HepG2 (cell line): ENCODE measurements at regions of chr12 and their contacts with region 1.

Region 1: DNA sequence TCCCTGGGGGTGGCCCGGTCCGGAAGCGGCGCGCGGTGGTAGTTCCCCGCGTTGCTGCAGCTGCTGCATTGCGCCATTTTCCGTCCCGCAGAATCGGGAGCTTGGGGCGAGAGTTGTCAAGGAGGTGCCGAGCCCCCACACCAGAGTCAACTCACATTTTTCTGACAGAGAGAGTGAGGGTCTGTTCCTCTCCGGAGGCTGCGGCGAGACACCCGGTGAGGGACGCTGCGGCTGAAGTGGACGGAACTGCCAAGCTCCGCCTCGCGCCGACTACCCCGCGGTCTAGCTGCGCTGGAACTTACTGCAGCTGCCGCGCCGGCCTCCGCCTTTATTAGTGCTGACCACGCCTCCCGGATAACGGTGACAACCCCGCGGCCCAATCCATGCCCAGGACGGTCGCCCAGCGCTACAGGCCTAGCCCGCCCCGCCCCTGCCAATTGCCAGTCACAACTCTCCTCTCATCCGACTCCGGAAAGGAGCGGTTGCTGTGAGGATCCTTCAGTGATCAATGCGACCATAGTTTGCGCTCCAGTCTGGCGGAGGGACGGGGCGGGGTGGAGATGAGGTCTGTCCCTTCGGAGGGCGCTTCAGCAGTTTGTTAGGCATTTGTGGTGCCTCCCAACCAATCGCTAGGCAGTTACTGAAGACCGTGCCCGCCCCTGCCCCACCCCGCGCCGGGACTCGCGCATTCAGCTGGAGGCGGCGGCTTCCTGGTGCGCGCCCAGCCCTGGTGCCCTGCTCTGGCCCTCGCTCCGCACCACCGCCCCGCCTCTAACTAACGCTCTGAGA is at the start of gene VAMP1:
- DNase-seq: peak; percentile 97
- ATAC-seq: peak; percentile 96
- H3K4me3 ChIP-seq: peak within 1 kb of the TSS; percentile 69 to 76 (median 74)
- H3K27ac ChIP-seq: peak within 1 kb of the TSS; percentile 56
- H3K4me1 ChIP-seq: peaks cover 44% of the 10 kb centered on the region
- H3K27me3 ChIP-seq: no peaks in the 10 kb centered on the region
- CTCF ChIP-seq: peak; percentile 34
- EP300 ChIP-seq: no peak
- POLR2A ChIP-seq: peak; percentile 99 to 100
- RAD21 ChIP-seq: no peak
- total RNA-seq, gene VAMP1: 0.45 and 2.5 TPM in 2 replicates

Region 2: DNA sequence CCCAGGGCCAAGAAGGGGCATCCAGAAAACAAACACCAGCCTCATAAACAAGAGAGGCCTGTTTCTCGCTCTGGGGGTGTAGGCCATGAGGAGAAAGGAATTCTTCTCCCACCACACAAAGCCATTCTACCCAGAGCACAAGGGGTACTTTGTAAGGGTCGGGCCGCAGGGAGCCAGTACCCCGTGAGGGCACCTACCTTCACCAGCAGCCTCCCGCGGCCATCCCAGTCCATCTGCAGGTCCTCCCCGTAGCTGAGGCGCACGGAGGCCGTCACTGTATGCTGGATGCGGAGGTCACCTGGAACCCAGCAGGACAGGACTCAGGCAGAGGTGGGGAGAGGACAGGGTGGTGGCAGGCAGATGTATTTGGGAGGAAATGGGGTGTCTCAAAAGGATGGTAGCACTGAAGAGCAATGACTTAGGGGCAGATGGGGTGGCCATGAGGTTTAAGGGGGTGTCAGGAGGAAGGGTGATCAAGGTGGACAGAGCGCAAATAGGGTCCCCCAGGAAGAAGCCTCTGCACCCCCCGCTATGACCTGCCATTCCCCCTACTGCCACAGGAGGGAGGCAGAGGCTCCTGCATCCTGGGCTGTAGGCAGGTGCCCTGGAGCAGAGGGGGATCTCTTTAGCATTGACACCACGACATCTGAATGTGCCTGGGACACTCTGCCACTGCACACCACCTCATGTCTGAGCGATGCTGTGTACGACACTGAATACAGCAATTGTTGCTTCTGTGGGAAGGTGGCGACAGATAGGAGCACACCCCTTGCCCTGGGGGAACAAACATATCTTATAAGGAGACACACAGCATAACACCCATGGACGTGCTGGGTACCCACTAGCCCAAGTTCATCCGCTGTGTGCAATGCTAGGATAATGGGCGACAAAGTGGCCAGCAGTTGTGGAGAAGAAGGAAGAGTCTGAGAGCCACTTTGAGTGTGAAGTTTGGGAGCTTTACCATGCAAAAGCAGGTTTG is 407.5 kb before region 1 on chr12:
- CTCF ChIA-PET with region 1: no interaction called
- POLR2A ChIA-PET with region 1: no interaction called
- in situ Hi-C with region 1: loop called (anchors 25 kb)
- intact Hi-C with region 1: no loop called
- DNase-seq: peak; percentile 24
- ATAC-seq: peak; percentile 73
- H3K4me3 ChIP-seq: peak overlapping the region in 1 of 3 experiments; percentile 42; a peak in 1 of 6 replicates
- H3K27ac ChIP-seq: no peak overlapping the region
- H3K4me1 ChIP-seq: peaks cover 54% of the 10 kb centered on the region
- H3K27me3 ChIP-seq: peaks cover 0 to 15% of the 10 kb centered on the region in 2 experiments; a peak in 2 of 5 replicates
- CTCF ChIP-seq: peak; percentile 95
- EP300 ChIP-seq: no peak
- POLR2A ChIP-seq: no peak
- RAD21 ChIP-seq: peak; percentile 89

Region 3: DNA sequence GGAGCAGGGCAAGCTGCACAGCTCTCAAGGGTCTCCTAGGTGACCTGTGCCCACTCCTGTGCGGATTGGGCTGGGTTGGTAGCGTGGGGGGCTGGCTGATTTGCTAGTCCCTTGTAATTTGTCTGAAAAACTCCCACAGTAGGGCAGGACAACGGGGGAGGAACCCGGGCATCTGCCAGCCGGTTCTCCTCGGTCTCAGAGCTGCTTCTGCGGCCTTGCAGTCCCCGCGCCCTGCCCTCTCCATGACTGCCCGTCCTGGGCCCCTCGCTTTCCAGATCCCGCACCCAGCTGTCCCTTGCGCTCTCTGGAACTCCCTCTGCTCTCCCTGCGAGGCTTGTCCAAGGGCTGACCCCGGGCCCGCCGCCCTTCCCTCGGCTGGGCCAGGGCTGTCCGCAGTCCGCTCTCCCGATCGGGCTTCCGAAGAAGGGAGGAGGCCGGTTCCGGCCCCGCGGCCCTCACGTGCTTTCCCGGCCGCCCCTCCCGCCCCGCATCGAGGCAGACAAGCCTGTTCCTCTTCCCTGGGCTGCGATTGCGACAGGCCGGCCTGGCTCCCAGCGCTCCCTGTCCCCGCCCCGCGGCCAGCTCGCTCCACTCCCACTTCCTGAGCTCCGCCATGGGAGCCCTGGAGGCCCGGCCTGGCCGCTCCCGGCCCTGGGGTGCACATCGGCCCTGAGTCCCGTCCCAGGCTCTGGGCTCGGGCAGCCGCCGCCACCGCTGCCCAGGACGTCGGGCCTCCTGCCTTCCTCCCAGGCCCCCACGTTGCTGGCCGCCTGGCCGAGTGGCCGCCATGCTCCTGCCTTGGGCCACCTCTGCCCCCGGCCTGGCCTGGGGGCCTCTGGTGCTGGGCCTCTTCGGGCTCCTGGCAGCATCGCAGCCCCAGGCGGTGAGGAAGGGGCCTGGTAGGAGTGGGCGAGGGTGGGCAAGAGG is 86.7 kb before region 1 on chr12 and contains the start of gene LTBR:
- CTCF ChIA-PET with region 1: no interaction called
- POLR2A ChIA-PET with region 1: interaction called, 25 read pairs
- in situ Hi-C with region 1: no loop called
- intact Hi-C with region 1: no loop called
- DNase-seq: peak; percentile 83
- ATAC-seq: peak; percentile 91
- H3K4me3 ChIP-seq: peak within 1 kb of the TSS; percentile 81 to 95 (median 87)
- H3K27ac ChIP-seq: peak within 1 kb of the TSS; percentile 86
- H3K4me1 ChIP-seq: peaks cover 59% of the 10 kb centered on the region
- H3K27me3 ChIP-seq: no peaks in the 10 kb centered on the region; a peak in 1 of 5 replicates
- CTCF ChIP-seq: peak; percentile 52; the same call in 1 of the 2 replicates
- EP300 ChIP-seq: peak in 1 of 2 experiments; percentile 33; a peak in 1 of 4 replicates
- POLR2A ChIP-seq: peak; percentile 67 to 74; a peak in 3 of 4 replicates
- RAD21 ChIP-seq: peak; percentile 36; the same call in 1 of the 2 replicates
- total RNA-seq, gene LTBR: 12.1 and 34.8 TPM in 2 replicates

Region 4: GRCh38 chr12:6423267-6424007 is 47.1 kb before region 1 on chr12:
- CTCF ChIA-PET with region 1: interaction called, 29 read pairs
- POLR2A ChIA-PET with region 1: interaction called, 20 read pairs
- in situ Hi-C with region 1: no loop called
- intact Hi-C with region 1: loop called (anchors 1 kb)
- DNase-seq: peak; percentile 81
- ATAC-seq: peak; percentile 92
- H3K4me3 ChIP-seq: peak overlapping the region in 1 of 3 experiments; percentile 12; a peak in 1 of 6 replicates
- H3K27ac ChIP-seq: no peak overlapping the region
- H3K4me1 ChIP-seq: peaks cover 63% of the 10 kb centered on the region
- H3K27me3 ChIP-seq: peaks cover 2 to 12% of the 10 kb centered on the region in 2 experiments; a peak in 2 of 5 replicates
- CTCF ChIP-seq: peak; percentile 95
- EP300 ChIP-seq: no peak
- POLR2A ChIP-seq: no peak
- RAD21 ChIP-seq: peak; percentile 84

Region 5: GRCh38 chr12:6451348-6452244 is 19.0 kb before region 1 on chr12 and contains the start of gene TAPBPL:
- CTCF ChIA-PET with region 1: no interaction called
- POLR2A ChIA-PET with region 1: interaction called, 68 read pairs
- in situ Hi-C with region 1: no loop called
- intact Hi-C with region 1: no loop called
- DNase-seq: peak; percentile 89
- ATAC-seq: peak; percentile 94
- H3K4me3 ChIP-seq: peak within 1 kb of the TSS; percentile 87 to 94 (median 90)
- H3K27ac ChIP-seq: peak within 1 kb of the TSS; percentile 90
- H3K4me1 ChIP-seq: peaks cover 34% of the 10 kb centered on the region
- H3K27me3 ChIP-seq: no peaks in the 10 kb centered on the region; a peak in 1 of 5 replicates
- CTCF ChIP-seq: no peak
- EP300 ChIP-seq: no peak
- POLR2A ChIP-seq: peak; percentile 68 to 79
- RAD21 ChIP-seq: no peak
- total RNA-seq, gene TAPBPL: 3.2 and 10.0 TPM in 2 replicates

Region 6: DNA sequence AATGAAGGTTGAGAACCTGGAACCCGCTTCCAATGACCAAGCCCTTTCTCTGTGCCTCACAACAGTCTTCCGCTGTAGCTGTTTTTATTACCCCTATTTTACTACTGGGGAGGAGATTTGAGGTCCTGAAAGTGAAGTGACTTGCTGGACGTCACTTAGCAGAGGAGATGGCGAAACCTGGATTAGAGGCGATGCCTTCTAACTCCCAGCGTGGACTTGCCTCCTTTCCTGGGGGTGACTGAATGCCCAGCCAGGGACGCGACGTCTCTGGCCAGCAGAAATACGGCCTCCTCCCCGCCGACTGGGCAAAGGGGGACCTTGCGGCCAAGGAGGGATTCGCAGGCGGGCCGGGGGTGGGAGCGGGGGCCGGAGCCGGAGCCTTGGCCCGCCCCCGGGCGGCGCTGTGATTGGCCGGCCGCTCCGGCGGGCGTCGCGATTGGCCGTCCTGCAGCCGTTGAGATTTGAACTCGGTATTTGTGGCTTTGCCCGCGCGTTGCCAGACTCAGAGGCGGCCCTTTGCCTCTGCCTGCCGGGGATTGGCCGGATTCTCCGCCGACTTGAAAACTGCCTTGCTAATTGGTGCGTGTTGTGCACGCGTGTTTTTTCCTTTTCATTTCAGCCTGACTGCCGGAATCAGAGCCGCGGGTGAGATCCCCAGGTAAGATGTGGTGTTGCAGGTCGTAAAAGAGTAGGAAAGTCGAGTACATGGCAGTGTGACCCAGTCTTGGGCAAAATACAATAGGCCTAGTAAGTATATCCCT is 23.1 kb after region 1 on chr12 and contains the start of gene NCAPD2:
- CTCF ChIA-PET with region 1: no interaction called
- POLR2A ChIA-PET with region 1: interaction called, 38 read pairs
- in situ Hi-C with region 1: no loop called
- intact Hi-C with region 1: no loop called
- DNase-seq: peak; percentile 94
- ATAC-seq: peak; percentile 94
- H3K4me3 ChIP-seq: peak within 1 kb of the TSS; percentile 80 to 83 (median 81)
- H3K27ac ChIP-seq: peak within 1 kb of the TSS; percentile 98
- H3K4me1 ChIP-seq: peaks cover 38% of the 10 kb centered on the region
- H3K27me3 ChIP-seq: no peaks in the 10 kb centered on the region; a peak in 1 of 5 replicates
- CTCF ChIP-seq: no peak; the same call in 1 of the 2 replicates
- EP300 ChIP-seq: no peak
- POLR2A ChIP-seq: peak; percentile 5 to 68; a peak in 3 of 4 replicates
- RAD21 ChIP-seq: no peak
- total RNA-seq, gene NCAPD2: 65.6 and 100 TPM in 2 replicates

Region 7: GRCh38 chr12:6540181-6540877 is 69.8 kb after region 1 on chr12:
- CTCF ChIA-PET with region 1: no interaction called
- POLR2A ChIA-PET with region 1: interaction called, 54 read pairs
- in situ Hi-C with region 1: no loop called
- intact Hi-C with region 1: loop called (anchors 10 kb)
- DNase-seq: no peak
- ATAC-seq: peak; percentile 2
- H3K4me3 ChIP-seq: no peak overlapping the region
- H3K27ac ChIP-seq: no peak overlapping the region
- H3K4me1 ChIP-seq: peaks cover 53% of the 10 kb centered on the region
- H3K27me3 ChIP-seq: no peaks in the 10 kb centered on the region; a peak in 1 of 5 replicates
- CTCF ChIP-seq: no peak
- EP300 ChIP-seq: no peak
- POLR2A ChIP-seq: no peak
- RAD21 ChIP-seq: no peak

Region 8: DNA sequence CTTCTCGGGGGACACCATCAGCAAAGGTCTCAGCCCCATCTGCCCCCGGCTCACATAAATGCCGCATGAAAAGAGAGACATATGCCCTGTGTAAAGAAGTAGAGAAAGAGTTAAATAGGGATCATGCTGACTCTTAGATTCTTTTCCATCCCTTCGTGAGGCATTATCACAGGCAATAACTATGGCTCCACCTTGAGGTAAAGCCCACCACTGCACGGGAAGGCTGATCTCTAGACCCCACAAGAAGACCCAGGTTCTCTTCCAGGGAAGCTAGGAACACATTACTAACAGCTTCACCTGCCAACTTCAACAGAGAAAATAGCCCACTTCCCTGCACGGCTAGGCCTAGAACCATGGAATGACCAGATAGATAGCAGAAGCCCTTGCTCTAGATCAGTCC is 111.6 kb after region 1 on chr12:
- CTCF ChIA-PET with region 1: no interaction called
- POLR2A ChIA-PET with region 1: no interaction called
- in situ Hi-C with region 1: no loop called
- intact Hi-C with region 1: no loop called
- DNase-seq: no peak
- ATAC-seq: peak; percentile 68
- H3K4me3 ChIP-seq: no peak overlapping the region
- H3K27ac ChIP-seq: no peak overlapping the region
- H3K4me1 ChIP-seq: no peaks in the 10 kb centered on the region; the same call in 1 of the 2 replicates
- H3K27me3 ChIP-seq: no peaks in the 10 kb centered on the region; a peak in 1 of 5 replicates
- CTCF ChIP-seq: peak; percentile 35
- EP300 ChIP-seq: no peak
- POLR2A ChIP-seq: no peak
- RAD21 ChIP-seq: no peak